WTC11 (cell line): ENCODE measurements at regions of chr10 and their contacts with region 1.

Region 1: GRCh38 chr10:52644373-52645186 is 128.0 kb downstream of the MBL2 start:
- DNase-seq: peak; percentile 46
- ATAC-seq: peak; percentile 65
- H3K4me3 Mint-ChIP-seq: no peak overlapping the region
- H3K27ac Mint-ChIP-seq: no peak overlapping the region
- H3K4me1 Mint-ChIP-seq: peaks cover 4% of the 10 kb centered on the region; the same call in 1 of the 2 replicates
- H3K27me3 Mint-ChIP-seq: no peaks in the 10 kb centered on the region
- CTCF ChIP-seq: peak; percentile 68

Region 2: GRCh38 chr10:52668024-52668423 is 23.4 kb after region 1 on chr10:
- CTCF ChIA-PET with region 1: no interaction called
- POLR2A ChIA-PET with region 1: no interaction called
- DNase-seq: no peak
- ATAC-seq: no peak
- H3K4me3 Mint-ChIP-seq: no peak overlapping the region
- H3K27ac Mint-ChIP-seq: no peak overlapping the region
- H3K4me1 Mint-ChIP-seq: peaks cover 3% of the 10 kb centered on the region
- H3K27me3 Mint-ChIP-seq: no peaks in the 10 kb centered on the region
- CTCF ChIP-seq: no peak

Region 3: DNA sequence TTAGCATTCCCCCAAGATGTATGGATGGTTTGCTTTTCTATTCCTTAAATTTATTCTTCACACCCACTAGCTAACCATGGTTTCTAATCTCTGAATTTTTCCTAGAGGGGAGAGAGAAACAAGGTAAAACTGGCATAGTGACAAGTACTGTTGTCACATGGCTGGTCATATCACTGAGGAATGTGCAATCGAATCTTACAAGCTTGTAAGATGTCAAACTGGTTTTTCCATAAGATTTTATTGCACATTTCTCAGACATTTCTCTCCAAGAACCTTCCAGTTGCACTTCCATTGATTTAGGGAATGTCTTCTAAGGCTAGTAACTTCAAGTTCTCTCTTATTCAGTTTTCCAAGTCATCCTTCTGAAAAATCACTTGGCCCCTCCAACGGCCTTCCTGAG is 38.2 kb after region 1 on chr10:
- CTCF ChIA-PET with region 1: no interaction called
- POLR2A ChIA-PET with region 1: no interaction called
- DNase-seq: no peak
- ATAC-seq: no peak
- H3K4me3 Mint-ChIP-seq: no peak overlapping the region
- H3K27ac Mint-ChIP-seq: no peak overlapping the region
- H3K4me1 Mint-ChIP-seq: peaks cover 8% of the 10 kb centered on the region
- H3K27me3 Mint-ChIP-seq: no peaks in the 10 kb centered on the region
- CTCF ChIP-seq: no peak

Region 4: GRCh38 chr10:52729271-52730104 is 84.9 kb after region 1 on chr10:
- CTCF ChIA-PET with region 1: interaction called, 13 read pairs
- POLR2A ChIA-PET with region 1: no interaction called
- DNase-seq: no peak
- ATAC-seq: peak; percentile 52
- H3K4me3 Mint-ChIP-seq: no peak overlapping the region
- H3K27ac Mint-ChIP-seq: no peak overlapping the region
- H3K4me1 Mint-ChIP-seq: no peaks in the 10 kb centered on the region
- H3K27me3 Mint-ChIP-seq: no peaks in the 10 kb centered on the region; the same call in 1 of the 2 replicates
- CTCF ChIP-seq: 0 out of 2 replicates have a peak, but pooled peaks have one; percentile 19